HAP-1 (cell line): ENCODE measurements at regions of chr16 and their contacts with region 1.

Region 1: GRCh38 chr16:49592546-49593423 is 219.2 kb downstream of the C16orf78 start:
- DNase-seq: peak; percentile 43 to 65
- H3K4me3 ChIP-seq: no peak overlapping the region
- H3K4me1 ChIP-seq: peaks cover 4% of the 10 kb centered on the region; the same call in 1 of the 2 replicates
- H3K27me3 ChIP-seq: no peaks in the 10 kb centered on the region; the same call in 1 of the 2 replicates

Region 2: GRCh38 chr16:49407873-49408550 is 184.8 kb before region 1 on chr16:
- in situ Hi-C with region 1: loop called (anchors 25 kb)
- DNase-seq: peak; percentile 78 to 90
- H3K4me3 ChIP-seq: no peak overlapping the region
- H3K4me1 ChIP-seq: no peaks in the 10 kb centered on the region
- H3K27me3 ChIP-seq: no peaks in the 10 kb centered on the region